ENCODE measurements at regions of chr10 and their contacts with region 1.

Region 1: GRCh38 chr10:57657164-57657765 is 610.4 kb downstream of the IPMK start:
- DNase-seq: peak in 1 of 35 experiments; percentile 5
- ATAC-seq: no peak
- H3K4me3 ChIP-seq: no peak overlapping the region
- H3K4me3 Mint-ChIP-seq: no peak overlapping the region
- H3K27ac ChIP-seq: no peak overlapping the region
- H3K27ac Mint-ChIP-seq: no peak overlapping the region
- H3K4me1 ChIP-seq: no peaks in the 10 kb centered on the region
- H3K4me1 Mint-ChIP-seq: no peaks in the 10 kb centered on the region
- H3K27me3 ChIP-seq: no peaks in the 10 kb centered on the region
- H3K27me3 Mint-ChIP-seq: no peaks in the 10 kb centered on the region

Region 2: DNA sequence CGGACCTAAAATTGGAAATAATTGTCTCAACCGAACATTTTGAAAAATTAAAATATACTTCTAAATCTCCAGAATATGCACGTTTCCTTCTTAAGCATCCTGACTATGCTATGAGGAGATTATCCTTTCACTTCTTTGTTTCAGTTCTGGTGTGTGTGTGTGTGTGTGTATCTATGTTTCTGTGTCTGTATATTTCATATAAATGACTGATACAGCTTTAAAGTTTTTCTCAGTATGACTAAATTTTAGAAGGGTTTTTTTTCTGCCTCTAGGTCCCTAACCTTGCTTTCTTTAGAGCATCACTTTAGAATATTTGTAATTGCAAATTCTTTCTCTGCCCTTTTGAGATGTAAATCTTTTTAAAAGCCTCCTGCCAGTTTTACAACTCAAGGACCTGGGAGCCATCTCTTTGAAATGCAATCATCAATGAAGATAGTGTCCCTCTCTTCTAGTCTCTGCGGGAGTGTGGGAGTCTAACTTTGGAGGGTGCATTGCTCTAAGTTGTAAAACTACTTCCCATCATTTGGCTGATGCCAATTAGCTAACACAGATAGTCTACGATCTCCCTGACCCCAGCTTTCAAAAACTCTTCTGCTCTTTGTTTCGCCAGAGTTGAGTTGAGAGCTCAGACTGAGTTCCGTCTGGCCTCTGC is 514.2 kb before region 1 on chr10:
- CTCF ChIA-PET with region 1: no interaction called
- POLR2A ChIA-PET with region 1: no interaction called
- DNase-seq: no peak
- ATAC-seq: no peak
- H3K4me3 ChIP-seq: no peak overlapping the region
- H3K4me3 Mint-ChIP-seq: no peak overlapping the region
- H3K27ac ChIP-seq: no peak overlapping the region
- H3K27ac Mint-ChIP-seq: no peak overlapping the region
- H3K4me1 ChIP-seq: no peaks in the 10 kb centered on the region
- H3K4me1 Mint-ChIP-seq: no peaks in the 10 kb centered on the region
- H3K27me3 ChIP-seq: no peaks in the 10 kb centered on the region
- H3K27me3 Mint-ChIP-seq: no peaks in the 10 kb centered on the region

Region 3: DNA sequence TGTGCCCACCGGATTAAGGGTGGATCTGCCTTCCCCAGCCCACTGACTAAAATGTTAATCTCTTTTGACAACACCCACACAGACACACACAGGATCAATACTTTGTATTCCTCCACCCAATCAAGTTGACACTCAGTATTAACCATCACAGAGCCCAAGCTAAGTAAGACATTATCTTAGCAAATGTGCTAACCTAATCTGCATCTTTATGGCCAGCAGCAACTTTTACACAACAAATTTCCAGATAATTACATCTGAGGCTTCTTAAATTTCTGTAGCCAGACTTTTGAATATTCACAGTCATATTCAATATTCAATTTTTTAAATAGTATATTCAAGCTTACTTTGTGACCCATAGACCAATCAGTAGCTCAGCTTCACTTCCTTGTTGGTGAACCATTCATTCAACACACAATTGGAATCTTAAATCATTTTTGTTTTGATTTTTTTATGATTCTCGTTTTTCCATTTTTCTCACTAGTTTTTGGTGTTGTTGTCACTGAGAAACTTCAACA is 16.2 kb after region 1 on chr10:
- CTCF ChIA-PET with region 1: interaction called, 4 to 11 read pairs
- POLR2A ChIA-PET with region 1: no interaction called
- DNase-seq: no peak
- ATAC-seq: no peak
- H3K4me3 ChIP-seq: no peak overlapping the region
- H3K4me3 Mint-ChIP-seq: no peak overlapping the region
- H3K27ac ChIP-seq: no peak overlapping the region
- H3K27ac Mint-ChIP-seq: no peak overlapping the region
- H3K4me1 ChIP-seq: no peaks in the 10 kb centered on the region
- H3K4me1 Mint-ChIP-seq: no peaks in the 10 kb centered on the region
- H3K27me3 ChIP-seq: no peaks in the 10 kb centered on the region
- H3K27me3 Mint-ChIP-seq: no peaks in the 10 kb centered on the region